B cell (primary cell): ENCODE measurements at regions of chr7 and their contacts with region 1.

Region 1: DNA sequence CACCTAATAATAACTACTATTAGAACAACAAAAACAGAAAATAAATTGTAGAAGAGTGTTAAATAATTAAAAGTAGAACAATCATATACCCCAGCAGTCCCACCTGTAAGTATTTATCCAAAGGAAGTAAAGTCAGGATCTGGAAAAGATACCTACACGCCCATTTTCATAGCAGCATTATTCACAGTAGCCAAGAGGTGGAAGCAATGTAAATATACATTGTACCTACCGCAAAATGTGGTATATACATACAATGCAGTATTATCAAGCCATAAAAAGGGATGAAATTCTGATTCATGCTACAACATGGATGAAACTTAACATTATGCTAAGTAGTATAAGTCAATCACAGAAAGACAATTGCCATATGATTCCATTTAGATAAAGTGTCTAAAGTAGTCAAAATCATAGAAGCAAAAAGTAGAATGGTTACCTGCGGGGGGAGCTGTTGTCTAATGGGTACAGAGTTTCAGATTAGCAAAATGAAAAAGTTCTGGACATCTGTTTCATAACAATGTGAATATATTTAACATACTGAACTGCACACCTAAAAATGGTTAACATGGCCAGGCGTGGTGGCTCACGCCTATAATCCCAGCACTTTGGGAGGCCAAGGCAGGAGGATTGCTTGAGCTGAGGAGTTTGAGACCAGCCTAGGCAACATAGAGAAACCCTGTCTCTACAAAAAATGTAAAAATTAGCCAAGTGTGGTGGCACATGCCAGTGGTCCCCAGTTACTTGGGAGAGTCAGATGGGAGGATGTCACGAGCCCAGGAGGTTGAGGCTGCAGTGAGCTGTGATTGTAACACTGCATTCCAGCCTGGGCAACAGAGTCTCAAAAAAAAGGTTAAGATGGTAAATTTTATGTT is 6.0 kb upstream of the TMED4 start:
- DNase-seq: peak; percentile 78
- ATAC-seq: peak; percentile 83
- H3K4me3 ChIP-seq: no peak overlapping the region
- H3K4me3 Mint-ChIP-seq: no peak overlapping the region
- H3K27ac ChIP-seq: no peak overlapping the region
- H3K27ac Mint-ChIP-seq: no peak overlapping the region
- H3K4me1 ChIP-seq: peaks cover 1 to 3% of the 10 kb centered on the region in 2 donors
- H3K4me1 Mint-ChIP-seq: peaks cover 5% of the 10 kb centered on the region
- H3K27me3 ChIP-seq: peaks cover 0 to 2% (median 0%) of the 10 kb centered on the region in 4 experiments
- H3K27me3 Mint-ChIP-seq: peaks cover 1% of the 10 kb centered on the region
- CTCF ChIP-seq: peak; percentile 86

Region 2: DNA sequence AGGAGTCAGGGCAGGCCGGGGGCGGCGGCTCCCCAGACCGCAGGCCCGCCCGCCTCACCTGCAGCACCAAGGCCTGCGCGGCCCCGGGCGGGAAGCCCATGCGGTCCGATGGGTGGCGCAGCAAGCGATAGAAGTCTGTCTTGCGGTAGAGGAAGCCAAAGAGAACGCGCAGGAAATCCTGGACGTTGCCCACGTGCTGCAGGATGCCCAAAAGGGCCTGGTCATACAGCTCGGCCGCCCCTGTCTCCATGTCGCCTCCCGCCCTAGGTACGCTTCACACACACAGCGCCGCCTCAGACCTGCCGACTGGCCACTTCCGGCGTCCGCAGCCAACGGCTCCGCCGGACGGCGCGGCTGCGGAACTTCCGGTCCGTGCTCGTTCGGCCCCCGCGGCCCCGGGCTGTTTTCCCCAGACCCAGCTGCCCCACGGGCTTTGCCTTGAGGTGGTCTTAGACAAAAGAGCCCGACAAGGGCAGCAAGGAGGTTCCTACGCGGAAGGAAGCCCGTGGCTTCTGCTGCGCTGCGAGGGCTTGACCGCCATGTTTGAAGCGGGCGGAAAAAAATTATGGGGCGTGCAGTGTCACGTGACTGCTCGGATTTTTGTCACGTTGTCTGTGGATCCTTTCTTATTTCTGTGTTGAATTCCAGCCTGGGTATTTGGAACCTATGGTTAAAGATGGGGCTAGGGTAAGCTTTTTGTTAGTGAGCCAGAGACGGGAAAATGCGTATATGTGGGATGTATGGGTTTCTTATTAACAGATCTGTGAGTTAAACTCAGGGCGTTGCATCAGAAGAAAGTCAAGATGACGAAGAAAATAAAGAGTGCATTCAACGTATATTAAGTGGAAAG is 97.5 kb before region 1 on chr7 and contains the start of gene NUDCD3:
- CTCF ChIA-PET with region 1: no interaction called
- POLR2A ChIA-PET with region 1: no interaction called
- intact Hi-C with region 1: no loop called
- DNase-seq: peak; percentile 91
- ATAC-seq: peak; percentile 84
- H3K4me3 ChIP-seq: peak within 1 kb of the TSS; percentile 89 to 98 (median 93)
- H3K4me3 Mint-ChIP-seq: peak within 1 kb of the TSS; percentile 91
- H3K27ac ChIP-seq: peak within 1 kb of the TSS; percentile 93 to 94
- H3K27ac Mint-ChIP-seq: peak within 1 kb of the TSS; percentile 93
- H3K4me1 ChIP-seq: peaks cover 19 to 28% of the 10 kb centered on the region in 2 donors
- H3K4me1 Mint-ChIP-seq: peaks cover 44% of the 10 kb centered on the region
- H3K27me3 ChIP-seq: peaks cover 0 to 6% (median 3%) of the 10 kb centered on the region in 4 experiments
- H3K27me3 Mint-ChIP-seq: peaks cover 8% of the 10 kb centered on the region
- CTCF ChIP-seq: peak; percentile 27
- total RNA-seq, gene NUDCD3: 101 and 120 TPM in 2 replicates

Region 3: GRCh38 chr7:44769776-44770662 is 181.9 kb after region 1 on chr7:
- CTCF ChIA-PET with region 1: interaction called, 8 read pairs
- POLR2A ChIA-PET with region 1: no interaction called
- intact Hi-C with region 1: loop called (anchors 2 kb)
- DNase-seq: peak; percentile 49
- ATAC-seq: peak; percentile 26
- H3K4me3 ChIP-seq: peak overlapping the region in 1 of 5 experiments; percentile 7
- H3K4me3 Mint-ChIP-seq: peak overlapping the region; percentile 51
- H3K27ac ChIP-seq: peak overlapping the region; percentile 73 to 77
- H3K27ac Mint-ChIP-seq: peak overlapping the region; percentile 97
- H3K4me1 ChIP-seq: peaks cover 31 to 62% of the 10 kb centered on the region in 2 donors
- H3K4me1 Mint-ChIP-seq: peaks cover 55% of the 10 kb centered on the region
- H3K27me3 ChIP-seq: no peaks in the 10 kb centered on the region
- H3K27me3 Mint-ChIP-seq: no peaks in the 10 kb centered on the region
- CTCF ChIP-seq: no peak